ENCODE measurements at regions of chrX and their contacts with region 1.

Region 1: DNA sequence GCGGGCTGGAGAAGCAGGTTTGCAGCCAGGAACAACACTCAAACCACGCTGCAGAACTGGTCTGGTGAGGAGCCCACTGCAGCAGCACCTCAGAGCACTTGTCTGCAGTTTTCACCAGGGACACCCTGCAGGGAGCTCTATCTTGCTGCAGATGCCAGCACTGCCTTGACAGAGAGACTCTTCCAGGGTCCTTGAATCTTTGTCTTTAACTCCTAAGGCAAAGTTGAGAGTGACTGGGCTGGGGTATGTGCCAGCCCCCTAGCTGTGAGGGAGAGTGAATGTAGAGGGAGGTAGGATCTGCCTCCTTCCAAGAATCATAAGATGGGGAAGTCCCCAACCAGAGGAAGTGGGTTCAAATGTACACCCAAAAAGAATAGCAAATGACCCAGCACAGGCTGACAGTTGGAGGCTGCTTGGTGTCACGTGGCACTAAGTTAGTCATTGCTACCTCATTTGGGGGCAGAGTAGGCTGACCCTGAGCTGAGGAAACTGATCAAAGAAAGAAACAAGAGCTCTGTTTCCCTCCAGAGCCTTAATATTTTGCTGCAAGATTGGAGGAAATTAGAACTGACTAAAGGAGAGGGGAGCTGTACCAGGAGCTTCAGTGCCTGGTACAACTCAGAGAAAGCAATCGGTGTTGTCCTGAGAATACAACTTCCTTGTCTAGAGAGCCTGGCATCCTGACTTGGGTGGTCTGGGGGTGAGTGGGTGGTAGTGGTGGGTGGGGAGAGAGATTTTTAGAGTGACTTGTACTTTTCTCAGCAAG is 28.2 kb upstream of the HUWE1 start:
- DNase-seq: peak; percentile 65 to 84 (median 70)
- H3K4me3 ChIP-seq: peak overlapping the region in 1 of 2 donors; percentile 38
- H3K4me3 Mint-ChIP-seq: peak overlapping the region; percentile 83 to 92 (median 86)
- H3K27ac ChIP-seq: peak overlapping the region; percentile 81
- H3K27ac Mint-ChIP-seq: peak overlapping the region; percentile 93 to 99 (median 95)
- H3K4me1 ChIP-seq: peaks cover 51% of the 10 kb centered on the region
- H3K4me1 Mint-ChIP-seq: peaks cover 35 to 57% (median 51%) of the 10 kb centered on the region in 4 donors
- H3K27me3 ChIP-seq: no peaks in the 10 kb centered on the region
- H3K27me3 Mint-ChIP-seq: no peaks in the 10 kb centered on the region

Region 2: GRCh38 chrX:53683556-53684414 is 31.0 kb before region 1 on chrX:
- CTCF ChIA-PET with region 1: interaction called, 29 read pairs
- POLR2A ChIA-PET with region 1: interaction called, 106 read pairs
- intact Hi-C with region 1: loop called (anchors 1 kb)
- DNase-seq: peak; percentile 88 to 97 (median 95)
- H3K4me3 ChIP-seq: peak overlapping the region; percentile 65 to 66
- H3K4me3 Mint-ChIP-seq: peak overlapping the region; percentile 88 to 97 (median 90)
- H3K27ac ChIP-seq: peak overlapping the region; percentile 94
- H3K27ac Mint-ChIP-seq: peak overlapping the region; percentile 87 to 99 (median 97)
- H3K4me1 ChIP-seq: peaks cover 41% of the 10 kb centered on the region
- H3K4me1 Mint-ChIP-seq: peaks cover 16 to 52% (median 33%) of the 10 kb centered on the region in 4 donors
- H3K27me3 ChIP-seq: no peaks in the 10 kb centered on the region
- H3K27me3 Mint-ChIP-seq: no peaks in the 10 kb centered on the region

Measured in CD4-positive, alpha-beta memory T cell (primary cell).